Activated CD8-positive, alpha-beta T cell treated with anti-CD3 and anti-CD28 coated beads for 36 hours (primary cell): ENCODE measurements at regions of chr3 and their contacts with region 1.

Region 1: GRCh38 chr3:170811928-170812591 is 57.9 kb downstream of the RPL22L1 start:
- DNase-seq: peak; percentile 82
- ATAC-seq: peak; percentile 96
- H3K4me3 Mint-ChIP-seq: no peak overlapping the region
- H3K27ac Mint-ChIP-seq: no peak overlapping the region
- H3K4me1 Mint-ChIP-seq: no peaks in the 10 kb centered on the region
- H3K27me3 Mint-ChIP-seq: no peaks in the 10 kb centered on the region
- CTCF ChIP-seq: peak; percentile 89

Region 2: DNA sequence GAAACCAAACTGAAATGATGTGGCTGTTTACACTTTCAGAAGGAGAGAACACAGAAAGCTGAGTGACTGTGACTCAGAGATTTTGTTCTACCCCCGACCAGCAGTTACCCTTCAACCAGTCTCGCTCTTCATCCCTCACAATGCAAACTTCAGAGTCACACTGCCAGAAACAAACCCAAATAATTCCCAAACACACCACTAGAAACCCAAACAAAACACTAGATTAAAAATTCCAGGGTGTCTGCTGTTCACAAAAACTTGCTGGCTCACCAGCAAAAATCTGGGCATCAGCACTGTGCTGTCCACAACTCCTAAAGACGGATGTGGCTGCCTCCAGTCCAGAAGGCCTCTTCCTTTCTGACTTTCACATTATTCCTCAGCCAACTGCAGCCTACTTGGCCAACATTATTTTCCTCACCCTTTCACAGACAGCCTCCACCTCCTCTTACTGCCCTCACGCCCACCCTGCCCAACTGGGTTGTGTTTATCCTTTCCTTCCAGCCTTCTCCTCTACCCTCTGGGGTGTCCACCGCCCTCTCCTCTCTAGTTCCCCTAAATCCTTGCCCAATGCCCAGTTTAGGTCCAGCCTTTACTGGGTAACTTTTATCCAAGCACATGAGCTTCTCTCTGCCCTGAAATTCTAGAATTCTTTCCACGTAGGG is 1219.9 kb before region 1 on chr3:
- CTCF ChIA-PET with region 1: no interaction called
- POLR2A ChIA-PET with region 1: no interaction called
- intact Hi-C with region 1: no loop called
- DNase-seq: no peak
- ATAC-seq: no peak
- H3K4me3 Mint-ChIP-seq: no peak overlapping the region
- H3K27ac Mint-ChIP-seq: no peak overlapping the region
- H3K4me1 Mint-ChIP-seq: no peaks in the 10 kb centered on the region
- H3K27me3 Mint-ChIP-seq: peaks cover 11% of the 10 kb centered on the region
- CTCF ChIP-seq: no peak

Region 3: GRCh38 chr3:170670504-170670903 is 141.6 kb before region 1 on chr3:
- CTCF ChIA-PET with region 1: no interaction called
- POLR2A ChIA-PET with region 1: no interaction called
- intact Hi-C with region 1: no loop called
- DNase-seq: no peak
- ATAC-seq: no peak
- H3K4me3 Mint-ChIP-seq: no peak overlapping the region
- H3K27ac Mint-ChIP-seq: no peak overlapping the region
- H3K4me1 Mint-ChIP-seq: no peaks in the 10 kb centered on the region
- H3K27me3 Mint-ChIP-seq: peaks cover 10% of the 10 kb centered on the region
- CTCF ChIP-seq: no peak

Region 4: GRCh38 chr3:170780955-170781354 is 31.1 kb before region 1 on chr3:
- CTCF ChIA-PET with region 1: interaction called, 11 read pairs
- POLR2A ChIA-PET with region 1: no interaction called
- intact Hi-C with region 1: no loop called
- DNase-seq: no peak
- ATAC-seq: no peak
- H3K4me3 Mint-ChIP-seq: no peak overlapping the region
- H3K27ac Mint-ChIP-seq: no peak overlapping the region
- H3K4me1 Mint-ChIP-seq: no peaks in the 10 kb centered on the region
- H3K27me3 Mint-ChIP-seq: peaks cover 31% of the 10 kb centered on the region
- CTCF ChIP-seq: no peak

Region 5: GRCh38 chr3:170829546-170830272 is 17.6 kb after region 1 on chr3:
- CTCF ChIA-PET with region 1: interaction called, 31 read pairs
- POLR2A ChIA-PET with region 1: no interaction called
- intact Hi-C with region 1: no loop called
- DNase-seq: no peak
- ATAC-seq: no peak
- H3K4me3 Mint-ChIP-seq: no peak overlapping the region
- H3K27ac Mint-ChIP-seq: no peak overlapping the region
- H3K4me1 Mint-ChIP-seq: peaks cover 9% of the 10 kb centered on the region
- H3K27me3 Mint-ChIP-seq: peaks cover 26% of the 10 kb centered on the region
- CTCF ChIP-seq: no peak

Region 6: GRCh38 chr3:170835336-170835735 is 23.3 kb after region 1 on chr3:
- CTCF ChIA-PET with region 1: interaction called, 11 read pairs
- POLR2A ChIA-PET with region 1: no interaction called
- intact Hi-C with region 1: no loop called
- DNase-seq: no peak
- ATAC-seq: no peak
- H3K4me3 Mint-ChIP-seq: no peak overlapping the region
- H3K27ac Mint-ChIP-seq: no peak overlapping the region
- H3K4me1 Mint-ChIP-seq: no peaks in the 10 kb centered on the region
- H3K27me3 Mint-ChIP-seq: peaks cover 33% of the 10 kb centered on the region
- CTCF ChIP-seq: no peak

Region 7: GRCh38 chr3:170848292-170848917 is 36.3 kb after region 1 on chr3:
- CTCF ChIA-PET with region 1: interaction called, 18 read pairs
- POLR2A ChIA-PET with region 1: no interaction called
- intact Hi-C with region 1: no loop called
- DNase-seq: no peak
- ATAC-seq: no peak
- H3K4me3 Mint-ChIP-seq: no peak overlapping the region
- H3K27ac Mint-ChIP-seq: no peak overlapping the region
- H3K4me1 Mint-ChIP-seq: no peaks in the 10 kb centered on the region
- H3K27me3 Mint-ChIP-seq: peaks cover 12% of the 10 kb centered on the region
- CTCF ChIP-seq: no peak